Activated CD8-positive, alpha-beta T cell treated with anti-CD3 and anti-CD28 coated beads for 36 hours (primary cell): ENCODE measurements at regions of chr7 and their contacts with region 1.

Region 1: GRCh38 chr7:32479574-32480200 is 10.5 kb downstream of the LSM5 start:
- DNase-seq: peak; percentile 55
- ATAC-seq: peak; percentile 53
- H3K4me3 Mint-ChIP-seq: no peak overlapping the region
- H3K27ac Mint-ChIP-seq: peak overlapping the region; percentile 24
- H3K4me1 Mint-ChIP-seq: peaks cover 7% of the 10 kb centered on the region
- H3K27me3 Mint-ChIP-seq: no peaks in the 10 kb centered on the region
- CTCF ChIP-seq: peak; percentile 65

Region 2: GRCh38 chr7:31744294-31744874 is 735.3 kb before region 1 on chr7:
- CTCF ChIA-PET with region 1: interaction called, 4 read pairs
- POLR2A ChIA-PET with region 1: no interaction called
- intact Hi-C with region 1: loop called (anchors 10 kb)
- DNase-seq: peak; percentile 68
- ATAC-seq: peak; percentile 51
- H3K4me3 Mint-ChIP-seq: no peak overlapping the region
- H3K27ac Mint-ChIP-seq: no peak overlapping the region
- H3K4me1 Mint-ChIP-seq: no peaks in the 10 kb centered on the region
- H3K27me3 Mint-ChIP-seq: peaks cover 3% of the 10 kb centered on the region
- CTCF ChIP-seq: peak; percentile 75

Region 3: GRCh38 chr7:32204361-32205018 is 275.2 kb before region 1 on chr7:
- CTCF ChIA-PET with region 1: interaction called, 31 read pairs
- POLR2A ChIA-PET with region 1: no interaction called
- intact Hi-C with region 1: no loop called
- DNase-seq: peak; percentile 21
- ATAC-seq: no peak
- H3K4me3 Mint-ChIP-seq: no peak overlapping the region
- H3K27ac Mint-ChIP-seq: no peak overlapping the region
- H3K4me1 Mint-ChIP-seq: no peaks in the 10 kb centered on the region
- H3K27me3 Mint-ChIP-seq: no peaks in the 10 kb centered on the region
- CTCF ChIP-seq: no peak

Region 4: DNA sequence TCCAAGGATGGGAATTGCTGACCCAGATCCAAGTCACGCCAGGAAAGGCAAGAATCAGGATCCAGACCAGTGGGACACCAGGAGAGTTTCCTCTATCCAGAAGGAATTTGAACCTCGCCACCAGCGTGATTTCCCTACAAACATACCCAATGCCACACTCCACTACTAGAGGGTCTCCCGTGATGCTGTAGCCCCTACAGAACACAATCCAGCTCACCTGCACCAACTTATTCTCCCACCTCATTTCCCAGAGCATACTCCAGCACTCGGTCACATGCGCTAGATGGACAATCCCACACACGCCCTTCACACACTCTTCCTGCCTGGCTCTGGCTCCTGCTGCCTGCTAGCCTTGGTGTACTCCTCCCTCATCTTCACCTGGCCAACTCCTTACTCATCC is 267.4 kb before region 1 on chr7:
- CTCF ChIA-PET with region 1: interaction called, 31 read pairs
- POLR2A ChIA-PET with region 1: no interaction called
- intact Hi-C with region 1: loop called (anchors 5 kb)
- DNase-seq: no peak
- ATAC-seq: no peak
- H3K4me3 Mint-ChIP-seq: no peak overlapping the region
- H3K27ac Mint-ChIP-seq: no peak overlapping the region
- H3K4me1 Mint-ChIP-seq: no peaks in the 10 kb centered on the region
- H3K27me3 Mint-ChIP-seq: no peaks in the 10 kb centered on the region
- CTCF ChIP-seq: no peak

Region 5: DNA sequence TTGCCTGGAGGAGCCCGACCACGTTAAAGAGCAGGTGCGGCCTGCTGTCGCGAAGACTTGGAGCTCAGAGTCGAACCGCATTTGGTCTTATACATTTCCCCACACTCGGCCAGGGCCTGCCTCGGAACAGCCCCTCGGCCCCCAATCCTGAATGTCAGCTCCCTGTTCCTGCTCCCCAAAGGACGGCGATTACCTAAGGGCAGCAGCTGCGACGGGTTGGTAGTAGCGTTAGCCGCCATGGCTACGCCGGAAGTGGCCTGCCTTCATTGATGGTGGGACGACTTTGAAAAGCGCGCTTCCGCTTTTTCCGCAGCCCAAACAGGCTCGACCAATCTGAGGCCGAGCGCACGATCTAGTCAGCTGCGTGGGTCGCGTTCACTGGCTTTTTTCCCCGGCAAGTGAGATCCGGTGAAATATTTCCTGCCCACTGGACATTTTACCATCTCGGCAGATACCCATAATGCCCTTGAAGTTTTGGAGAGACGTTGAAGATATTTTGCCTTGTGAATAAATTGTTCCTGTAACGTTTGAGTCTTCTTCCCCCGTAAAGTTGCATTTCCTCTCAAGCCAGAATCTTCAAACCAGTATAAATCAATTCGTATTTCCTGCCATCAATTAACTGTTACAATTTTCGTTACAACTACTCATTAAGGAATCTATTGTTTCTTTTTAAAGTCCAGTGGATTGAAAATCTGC is 10.6 kb after region 1 on chr7 and contains the start of gene LSM5:
- CTCF ChIA-PET with region 1: interaction called, 14 read pairs
- POLR2A ChIA-PET with region 1: no interaction called
- intact Hi-C with region 1: no loop called
- DNase-seq: peak; percentile 94
- ATAC-seq: peak; percentile 67
- H3K4me3 Mint-ChIP-seq: peak within 1 kb of the TSS; percentile 85
- H3K27ac Mint-ChIP-seq: peak within 1 kb of the TSS; percentile 96
- H3K4me1 Mint-ChIP-seq: peaks cover 30% of the 10 kb centered on the region
- H3K27me3 Mint-ChIP-seq: no peaks in the 10 kb centered on the region
- CTCF ChIP-seq: no peak
- total RNA-seq, gene LSM5: 122 to 124 TPM